OCI-LY7 (cell line): ENCODE measurements at regions of chr6 and their contacts with region 1.

Region 1: GRCh38 chr6:112076200-112076599 is 11.1 kb downstream of the TUBE1 start:
- DNase-seq: no peak
- H3K4me3 ChIP-seq: no peak overlapping the region
- H3K27ac ChIP-seq: no peak overlapping the region
- H3K4me1 ChIP-seq: no peaks in the 10 kb centered on the region
- CTCF ChIP-seq: no peak

Region 2: GRCh38 chr6:112065426-112065986 is 10.7 kb before region 1 on chr6:
- CTCF ChIA-PET with region 1: no interaction called
- POLR2A ChIA-PET with region 1: interaction called, 11 read pairs
- intact Hi-C with region 1: no loop called
- DNase-seq: no peak
- H3K4me3 ChIP-seq: no peak overlapping the region
- H3K27ac ChIP-seq: no peak overlapping the region
- H3K4me1 ChIP-seq: no peaks in the 10 kb centered on the region
- CTCF ChIP-seq: no peak

Region 3: GRCh38 chr6:112087136-112087911 is 11.1 kb after region 1 on chr6 and contains the starts of genes FAM229B and TUBE1:
- CTCF ChIA-PET with region 1: no interaction called
- POLR2A ChIA-PET with region 1: interaction called, 32 read pairs
- intact Hi-C with region 1: no loop called
- DNase-seq: peak; percentile 97
- H3K4me3 ChIP-seq: peak within 1 kb of the TSS; percentile 78
- H3K27ac ChIP-seq: peak within 1 kb of the TSS; percentile 49
- H3K4me1 ChIP-seq: peaks cover 6% of the 10 kb centered on the region
- CTCF ChIP-seq: no peak
- total RNA-seq, gene FAM229B: 3.7 and 14.9 TPM in 2 replicates
- total RNA-seq, gene TUBE1: 27.9 and 35.6 TPM in 2 replicates